Mucosa of descending colon (tissue), 3 donors: ENCODE measurements at regions of chr5 and their contacts with region 1.

Region 1: GRCh38 chr5:95846554-95847260 is 24.2 kb upstream of the GLRX start:
- DNase-seq: peak in 1 of 3 donors; percentile 77
- ATAC-seq: peak; percentile 86
- H3K4me3 ChIP-seq: no peak overlapping the region
- H3K4me1 ChIP-seq: peaks cover 6% of the 10 kb centered on the region
- CTCF ChIP-seq: peak; percentile 77

Region 2: GRCh38 chr5:95646554-95647431 is 199.9 kb before region 1 on chr5 and contains the start of gene RFESD:
- intact Hi-C with region 1: loop called (anchors 5 to 10 kb)
- DNase-seq: peak; percentile 100
- ATAC-seq: peak; percentile 98
- H3K4me3 ChIP-seq: no peak within 1 kb of the TSS
- H3K4me1 ChIP-seq: peaks cover 20% of the 10 kb centered on the region
- CTCF ChIP-seq: peak; percentile 21
- total RNA-seq, gene RFESD: 0.31 to 2.5 (median 1.4) TPM

Region 3: DNA sequence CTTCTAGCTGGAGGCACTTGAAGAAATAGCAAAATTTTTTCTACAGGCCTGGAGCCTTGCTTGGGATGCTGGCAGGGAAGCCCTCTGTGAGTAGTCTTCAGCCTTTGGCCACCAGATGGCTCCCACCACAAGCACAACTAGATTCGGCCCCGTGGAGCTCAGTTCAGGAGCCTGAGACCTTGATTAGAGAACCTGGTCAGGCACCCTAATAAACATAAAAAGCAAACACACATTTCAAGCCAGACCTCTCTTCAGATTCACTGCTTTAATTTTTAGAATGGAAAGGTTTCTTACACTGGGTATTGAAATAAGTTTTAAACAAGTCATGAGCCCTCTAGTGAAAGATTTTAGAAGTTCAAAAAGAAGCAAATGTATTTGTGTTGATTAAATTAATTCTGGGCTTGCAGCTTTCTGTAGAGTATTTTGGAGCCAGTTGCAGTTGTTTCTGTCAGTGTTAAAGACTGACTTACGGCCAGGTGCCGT is 65.6 kb before region 1 on chr5:
- intact Hi-C with region 1: loop called (anchors 1 to 5 kb)
- DNase-seq: peak; percentile 72 to 91 (median 81)
- ATAC-seq: peak; percentile 94
- H3K4me3 ChIP-seq: no peak overlapping the region
- H3K4me1 ChIP-seq: no peaks in the 10 kb centered on the region
- CTCF ChIP-seq: peak; percentile 73